ENCODE measurements at regions of chr3 and their contacts with region 1.

Region 1: GRCh38 chr3:88203642-88204055 is 53.9 kb downstream of the C3orf38 start:
- DNase-seq: peak; percentile 40
- ATAC-seq: peak; percentile 98
- H3K4me3 ChIP-seq: no peak overlapping the region
- H3K27ac ChIP-seq: no peak overlapping the region
- H3K4me1 ChIP-seq: no peaks in the 10 kb centered on the region
- H3K27me3 ChIP-seq: no peaks in the 10 kb centered on the region
- CTCF ChIP-seq: peak; percentile 87
- EP300 ChIP-seq: no peak
- POLR2A ChIP-seq: no peak
- RAD21 ChIP-seq: peak; percentile 64

Region 2: GRCh38 chr3:89098964-89099585 is 895.4 kb after region 1 on chr3:
- CTCF ChIA-PET with region 1: interaction called, 4 read pairs
- POLR2A ChIA-PET with region 1: no interaction called
- in situ Hi-C with region 1: no loop called
- intact Hi-C with region 1: loop called (anchors 1 kb)
- DNase-seq: peak; percentile 31
- ATAC-seq: peak; percentile 86
- H3K4me3 ChIP-seq: no peak overlapping the region
- H3K27ac ChIP-seq: no peak overlapping the region
- H3K4me1 ChIP-seq: no peaks in the 10 kb centered on the region
- H3K27me3 ChIP-seq: no peaks in the 10 kb centered on the region
- CTCF ChIP-seq: peak; percentile 73
- EP300 ChIP-seq: no peak
- POLR2A ChIP-seq: no peak
- RAD21 ChIP-seq: peak; percentile 44; the same call in 1 of the 2 replicates

Region 3: GRCh38 chr3:89113903-89114840 is 910.5 kb after region 1 on chr3:
- CTCF ChIA-PET with region 1: interaction called, 7 read pairs
- POLR2A ChIA-PET with region 1: no interaction called
- in situ Hi-C with region 1: loop called (anchors 5 kb)
- intact Hi-C with region 1: loop called (anchors 1 kb)
- DNase-seq: peak; percentile 20
- ATAC-seq: peak; percentile 100
- H3K4me3 ChIP-seq: peak overlapping the region; percentile 23 to 70 (median 34); a peak in 4 of 6 replicates
- H3K27ac ChIP-seq: no peak overlapping the region
- H3K4me1 ChIP-seq: peaks cover 7% of the 10 kb centered on the region; the same call in 1 of the 2 replicates
- H3K27me3 ChIP-seq: no peaks in the 10 kb centered on the region; a peak in 1 of 5 replicates
- CTCF ChIP-seq: peak; percentile 90
- EP300 ChIP-seq: no peak
- POLR2A ChIP-seq: no peak
- RAD21 ChIP-seq: peak; percentile 55

Region 4: GRCh38 chr3:90091204-90091924 is 1887.7 kb after region 1 on chr3:
- CTCF ChIA-PET with region 1: no interaction called
- POLR2A ChIA-PET with region 1: no interaction called
- in situ Hi-C with region 1: no loop called
- intact Hi-C with region 1: loop called (anchors 2 kb)
- DNase-seq: peak; percentile 2
- ATAC-seq: peak; percentile 89
- H3K4me3 ChIP-seq: no peak overlapping the region
- H3K27ac ChIP-seq: no peak overlapping the region
- H3K4me1 ChIP-seq: no peaks in the 10 kb centered on the region
- H3K27me3 ChIP-seq: no peaks in the 10 kb centered on the region; a peak in 1 of 5 replicates
- CTCF ChIP-seq: peak; percentile 42
- EP300 ChIP-seq: no peak
- POLR2A ChIP-seq: no peak
- RAD21 ChIP-seq: no peak

Region 5: GRCh38 chr3:90184861-90185260 is 1981.2 kb after region 1 on chr3:
- CTCF ChIA-PET with region 1: no interaction called
- POLR2A ChIA-PET with region 1: no interaction called
- in situ Hi-C with region 1: no loop called
- intact Hi-C with region 1: loop called (anchors 10 kb)
- DNase-seq: no peak
- ATAC-seq: no peak
- H3K4me3 ChIP-seq: no peak overlapping the region
- H3K27ac ChIP-seq: no peak overlapping the region
- H3K4me1 ChIP-seq: no peaks in the 10 kb centered on the region
- H3K27me3 ChIP-seq: no peaks in the 10 kb centered on the region
- CTCF ChIP-seq: no peak
- EP300 ChIP-seq: no peak
- POLR2A ChIP-seq: no peak
- RAD21 ChIP-seq: no peak